ENCODE measurements at regions of chr10 and their contacts with region 1.

Region 1: GRCh38 chr10:122112625-122113160 is 123.7 kb downstream of the TACC2 start:
- DNase-seq: peak; percentile 92
- H3K4me3 ChIP-seq: peak overlapping the region; percentile 73 to 83 (median 75)
- H3K27ac ChIP-seq: peak overlapping the region; percentile 75
- H3K4me1 ChIP-seq: peaks cover 40% of the 10 kb centered on the region
- H3K27me3 ChIP-seq: no peaks in the 10 kb centered on the region
- CTCF ChIP-seq: peak; percentile 41 to 76

Region 2: DNA sequence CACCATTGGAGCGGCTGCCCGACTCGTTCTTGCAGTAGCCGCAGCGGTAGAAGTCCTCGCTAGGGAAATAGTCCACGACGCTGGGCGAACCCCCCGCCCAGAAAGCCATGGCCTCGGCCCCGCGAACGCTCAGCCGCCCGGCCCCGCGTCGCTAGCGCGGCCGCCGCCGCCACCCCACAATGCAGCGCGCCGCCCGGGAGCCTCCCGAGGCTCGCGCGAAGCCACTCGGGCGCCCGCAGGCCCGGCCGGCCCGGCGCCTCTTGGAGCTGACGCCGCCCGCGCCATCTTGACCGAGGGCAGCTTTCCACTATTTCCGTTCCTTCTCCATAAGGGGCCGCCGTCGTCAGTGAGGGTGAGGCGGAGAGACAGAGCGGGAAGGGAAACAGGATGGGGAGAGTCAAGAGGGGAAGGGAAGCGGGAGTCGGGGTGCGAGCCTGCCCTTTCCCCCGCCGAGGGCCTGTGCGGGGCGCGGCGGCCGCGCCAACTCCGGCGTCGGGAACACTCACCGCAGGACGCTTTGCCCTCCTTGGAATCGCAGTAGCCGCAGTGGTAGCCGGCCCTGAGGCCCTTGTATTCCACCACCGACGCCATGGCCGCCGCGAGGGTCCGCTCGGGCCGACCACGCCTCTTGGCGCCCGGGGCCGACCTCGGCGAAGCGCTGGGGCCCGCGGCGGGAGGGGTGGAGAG is 184.7 kb before region 1 on chr10 and contains the start of gene ATE1:
- CTCF ChIA-PET with region 1: no interaction called
- dilution Hi-C with region 1: no loop called
- in situ Hi-C with region 1: no loop called
- intact Hi-C with region 1: loop called (anchors 1 kb)
- DNase-seq: peak; percentile 93
- H3K4me3 ChIP-seq: peak within 1 kb of the TSS; percentile 80 to 98 (median 93)
- H3K27ac ChIP-seq: peak within 1 kb of the TSS; percentile 90
- H3K4me1 ChIP-seq: peaks cover 14% of the 10 kb centered on the region
- H3K27me3 ChIP-seq: no peaks in the 10 kb centered on the region
- CTCF ChIP-seq: peak in 1 of 2 donors; percentile 16
- total RNA-seq, gene ATE1: 22.0 to 23.9 TPM

Region 3: DNA sequence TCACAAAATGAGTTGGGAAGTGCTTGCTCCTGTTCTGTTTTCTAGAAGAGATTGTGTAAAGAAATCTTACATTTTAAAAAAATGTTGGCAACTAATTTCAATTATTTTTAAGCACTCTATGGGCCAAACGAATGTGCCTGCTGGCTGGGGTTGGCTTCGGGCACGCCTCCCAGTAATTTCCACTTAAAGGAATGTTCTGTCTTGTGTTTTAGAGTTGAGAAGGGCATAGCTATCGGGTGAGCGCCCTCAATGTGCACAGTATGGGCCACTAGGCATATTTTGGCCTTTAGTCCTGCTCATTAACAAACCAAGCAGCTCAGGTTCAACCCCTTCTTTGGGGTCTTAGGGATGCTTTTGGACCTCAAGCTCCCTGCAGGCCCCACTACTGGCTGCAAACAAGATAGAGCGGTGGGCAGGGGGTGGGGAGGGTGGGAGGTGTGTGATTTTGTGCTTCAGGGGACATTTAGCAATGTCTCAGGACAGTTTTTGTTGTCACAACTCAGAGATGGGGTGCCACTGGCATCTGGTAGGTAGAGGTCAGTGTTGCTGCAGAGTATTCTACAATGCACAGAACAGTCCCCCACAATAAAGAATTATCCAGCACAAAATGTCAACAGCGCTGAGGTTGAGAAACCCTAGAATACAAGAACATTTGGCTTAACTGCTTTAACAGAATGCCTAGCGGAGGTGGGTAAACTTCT is 83.0 kb before region 1 on chr10:
- CTCF ChIA-PET with region 1: no interaction called
- dilution Hi-C with region 1: no loop called
- in situ Hi-C with region 1: no loop called
- intact Hi-C with region 1: loop called (anchors 1 kb)
- DNase-seq: no peak
- H3K4me3 ChIP-seq: no peak overlapping the region
- H3K27ac ChIP-seq: no peak overlapping the region
- H3K4me1 ChIP-seq: no peaks in the 10 kb centered on the region
- H3K27me3 ChIP-seq: no peaks in the 10 kb centered on the region
- CTCF ChIP-seq: peak in 1 of 2 donors; percentile 39

Region 4: GRCh38 chr10:122062831-122063674 is 49.6 kb before region 1 on chr10:
- CTCF ChIA-PET with region 1: interaction called, 4 read pairs
- dilution Hi-C with region 1: loop called (anchors 5 kb)
- in situ Hi-C with region 1: no loop called
- intact Hi-C with region 1: loop called (anchors 2 kb)
- DNase-seq: peak; percentile 96
- H3K4me3 ChIP-seq: no peak overlapping the region
- H3K27ac ChIP-seq: peak overlapping the region; percentile 76
- H3K4me1 ChIP-seq: peaks cover 10% of the 10 kb centered on the region
- H3K27me3 ChIP-seq: no peaks in the 10 kb centered on the region
- CTCF ChIP-seq: no peak

Region 5: GRCh38 chr10:122142641-122143237 is 30.0 kb after region 1 on chr10:
- CTCF ChIA-PET with region 1: no interaction called
- dilution Hi-C with region 1: no loop called
- in situ Hi-C with region 1: no loop called
- intact Hi-C with region 1: loop called (anchors 2 kb)
- DNase-seq: no peak
- H3K4me3 ChIP-seq: no peak overlapping the region
- H3K27ac ChIP-seq: no peak overlapping the region
- H3K4me1 ChIP-seq: peaks cover 39% of the 10 kb centered on the region
- H3K27me3 ChIP-seq: no peaks in the 10 kb centered on the region
- CTCF ChIP-seq: peak; percentile 75 to 91

Region 6: GRCh38 chr10:122391875-122392274 is 279.2 kb after region 1 on chr10:
- CTCF ChIA-PET with region 1: no interaction called
- dilution Hi-C with region 1: no loop called
- in situ Hi-C with region 1: no loop called
- intact Hi-C with region 1: no loop called
- DNase-seq: no peak
- H3K4me3 ChIP-seq: no peak overlapping the region
- H3K27ac ChIP-seq: no peak overlapping the region
- H3K4me1 ChIP-seq: peaks cover 10% of the 10 kb centered on the region
- H3K27me3 ChIP-seq: no peaks in the 10 kb centered on the region
- CTCF ChIP-seq: no peak